ENCODE measurements at regions of chr3 and their contacts with region 1.

Region 1: DNA sequence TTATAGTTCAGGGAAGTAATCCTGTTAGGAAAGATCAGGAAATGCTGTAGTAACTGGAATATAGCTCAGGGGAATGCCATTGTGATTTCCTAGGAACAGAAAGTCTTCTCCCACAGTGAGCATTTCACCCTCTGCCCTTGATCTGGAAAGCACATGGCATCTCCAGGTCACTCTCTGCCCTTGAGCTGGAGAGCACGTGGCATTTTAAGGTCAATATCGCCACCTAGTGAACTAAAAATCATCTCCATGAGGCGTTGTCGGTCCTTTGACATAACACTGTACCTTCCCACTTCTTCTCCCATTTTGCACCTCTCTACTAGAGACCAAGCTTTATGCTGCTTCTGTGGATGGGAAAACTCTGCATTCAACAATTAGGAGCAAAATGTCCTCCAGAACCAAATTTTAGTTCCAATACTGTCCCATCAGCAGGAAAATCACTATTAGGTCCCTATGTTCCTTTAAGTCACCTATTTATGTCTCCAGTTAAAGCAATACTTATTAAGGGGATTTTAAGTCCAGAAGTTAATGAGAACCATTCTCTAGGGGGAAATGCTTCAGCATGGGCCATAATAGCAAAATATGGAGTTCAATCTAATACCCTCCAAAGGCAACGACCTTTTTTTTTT is 54.7 kb upstream of the GK5 start:
- DNase-seq: peak; percentile 65 to 87
- H3K4me3 ChIP-seq: no peak overlapping the region
- H3K4me1 ChIP-seq: no peaks in the 10 kb centered on the region
- H3K27me3 ChIP-seq: no peaks in the 10 kb centered on the region

Region 2: DNA sequence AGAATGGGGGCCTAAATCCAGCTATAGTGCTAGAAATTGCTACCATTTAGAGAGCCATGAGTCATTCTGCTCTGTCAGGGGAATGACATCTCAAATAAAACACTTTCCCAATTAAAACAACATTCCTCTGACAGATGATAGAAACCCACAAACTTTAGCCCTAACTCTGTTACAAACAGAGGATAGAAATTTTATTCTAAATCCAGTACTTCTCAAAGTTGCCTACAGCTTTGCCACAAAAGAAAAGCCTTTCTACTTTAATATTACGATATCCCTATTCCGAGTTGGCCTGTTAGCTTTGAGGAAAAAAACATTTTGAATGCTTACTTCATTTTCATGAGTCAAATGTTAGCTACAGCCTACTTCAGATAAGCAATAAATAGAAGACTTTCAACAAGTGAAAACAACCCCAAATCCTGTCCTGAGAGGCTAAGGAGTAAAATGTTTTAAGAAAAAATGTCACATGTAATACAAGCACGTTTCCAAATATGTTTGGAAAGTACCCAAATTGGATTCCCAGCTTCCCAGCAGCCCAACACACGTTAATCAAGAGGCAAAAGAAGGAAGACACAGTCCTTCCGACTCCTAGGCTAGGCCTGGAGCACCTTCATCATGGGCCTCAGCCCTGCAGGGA is 320.0 kb before region 1 on chr3:
- in situ Hi-C with region 1: loop called (anchors 5 kb)
- DNase-seq: no peak
- H3K4me3 ChIP-seq: no peak overlapping the region
- H3K4me1 ChIP-seq: peaks cover 7% of the 10 kb centered on the region
- H3K27me3 ChIP-seq: no peaks in the 10 kb centered on the region

Region 3: DNA sequence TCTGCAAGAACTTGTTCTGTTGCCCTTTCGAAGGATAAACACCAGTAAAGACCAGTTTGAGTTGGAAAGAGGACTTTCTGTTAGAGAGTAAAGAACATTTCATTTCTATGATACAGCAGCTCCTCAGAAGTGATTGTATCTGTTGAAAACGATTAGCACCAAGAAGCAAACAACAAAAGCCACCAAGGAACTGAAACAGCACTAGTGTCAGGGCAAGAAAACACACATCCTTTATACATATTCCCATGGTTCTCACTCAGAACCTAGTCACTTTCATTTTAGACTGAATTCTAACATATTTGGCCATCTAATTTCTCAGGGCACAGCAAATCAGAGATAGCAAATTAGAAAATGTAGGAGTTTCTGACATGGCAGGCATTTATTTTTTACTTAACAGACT is 287.6 kb before region 1 on chr3:
- in situ Hi-C with region 1: no loop called
- DNase-seq: no peak
- H3K4me3 ChIP-seq: no peak overlapping the region
- H3K4me1 ChIP-seq: peaks cover 18% of the 10 kb centered on the region
- H3K27me3 ChIP-seq: no peaks in the 10 kb centered on the region

Region 4: DNA sequence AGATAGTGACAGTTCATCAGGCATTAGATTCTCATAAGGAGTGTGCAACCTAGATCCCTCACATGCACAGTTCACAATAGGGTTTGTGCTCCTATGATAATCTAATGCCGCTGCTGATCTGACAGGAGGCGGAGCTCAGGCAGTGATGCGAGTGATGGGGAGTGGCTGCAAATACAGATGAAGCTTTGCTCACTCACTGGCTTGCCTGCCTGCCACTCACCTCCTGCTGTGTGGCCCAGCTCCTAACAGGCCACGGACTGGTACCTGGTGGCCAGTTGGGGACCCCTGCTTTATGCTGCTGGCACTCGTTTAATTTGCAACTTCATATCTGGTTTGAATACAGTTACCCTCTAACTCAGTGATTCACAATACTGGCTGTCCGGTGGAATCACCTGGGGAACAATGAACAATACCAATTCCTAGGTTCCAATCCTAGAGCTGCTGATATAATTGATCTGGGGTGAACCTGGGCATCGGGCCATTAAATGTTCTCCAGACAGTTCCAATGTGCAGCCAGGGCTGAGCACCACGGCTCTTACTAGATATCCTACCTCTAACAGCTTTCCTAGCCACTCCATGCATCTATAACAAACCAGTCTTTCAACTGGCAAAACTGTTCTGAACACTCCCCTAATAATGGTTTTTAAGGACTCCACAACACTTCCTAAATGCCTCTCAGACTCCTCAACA is 272.2 kb before region 1 on chr3:
- in situ Hi-C with region 1: no loop called
- DNase-seq: no peak
- H3K4me3 ChIP-seq: no peak overlapping the region
- H3K4me1 ChIP-seq: peaks cover 11% of the 10 kb centered on the region
- H3K27me3 ChIP-seq: no peaks in the 10 kb centered on the region

Region 5: GRCh38 chr3:142129516-142130171 is 150.4 kb before region 1 on chr3:
- in situ Hi-C with region 1: loop called (anchors 10 kb)
- DNase-seq: no peak
- H3K4me3 ChIP-seq: no peak overlapping the region
- H3K4me1 ChIP-seq: no peaks in the 10 kb centered on the region
- H3K27me3 ChIP-seq: no peaks in the 10 kb centered on the region